ENCODE measurements at regions of chr17 and their contacts with region 1.

Region 1: DNA sequence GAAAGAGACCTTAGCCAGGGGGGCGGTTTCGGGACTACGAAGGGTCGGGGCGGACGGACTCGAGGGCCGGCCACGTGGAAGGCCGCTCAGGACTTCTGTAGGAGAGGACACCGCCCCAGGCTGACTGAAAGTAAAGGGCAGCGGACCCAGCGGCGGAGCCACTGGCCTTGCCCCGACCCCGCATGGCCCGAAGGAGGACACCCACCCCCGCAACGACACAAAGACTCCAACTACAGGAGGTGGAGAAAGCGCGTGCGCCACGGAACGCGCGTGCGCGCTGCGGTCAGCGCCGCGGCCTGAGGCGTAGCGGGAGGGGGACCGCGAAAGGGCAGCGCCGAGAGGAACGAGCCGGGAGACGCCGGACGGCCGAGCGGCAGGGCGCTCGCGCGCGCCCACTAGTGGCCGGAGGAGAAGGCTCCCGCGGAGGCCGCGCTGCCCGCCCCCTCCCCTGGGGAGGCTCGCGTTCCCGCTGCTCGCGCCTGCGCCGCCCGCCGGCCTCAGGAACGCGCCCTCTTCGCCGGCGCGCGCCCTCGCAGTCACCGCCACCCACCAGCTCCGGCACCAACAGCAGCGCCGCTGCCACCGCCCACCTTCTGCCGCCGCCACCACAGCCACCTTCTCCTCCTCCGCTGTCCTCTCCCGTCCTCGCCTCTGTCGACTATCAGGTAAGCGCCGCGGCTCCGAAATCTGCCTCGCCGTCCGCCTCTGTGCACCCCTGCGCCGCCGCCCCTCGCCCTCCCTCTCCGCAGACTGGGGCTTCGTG is at the start of gene MAPT:
- DNase-seq: peak; percentile 84 to 96
- H3K4me3 ChIP-seq: peak within 1 kb of the TSS; percentile 41 to 74 (median 67)
- H3K27ac ChIP-seq: no peak within 1 kb of the TSS
- H3K4me1 ChIP-seq: peaks cover 0 to 20% (median 9%) of the 10 kb centered on the region in 4 experiments; a peak in 6 of 7 replicates
- H3K27me3 ChIP-seq: peaks cover 39 to 60% (median 57%) of the 10 kb centered on the region in 4 experiments
- CTCF ChIP-seq: peak; percentile 84 to 90 (median 87)
- EP300 ChIP-seq: 0 out of 3 replicates have a peak, but pooled peaks of 1 of the 2 experiments have one; percentile 2
- POLR2A ChIP-seq: peak in 1 of 2 experiments; percentile 64; a peak in 2 of 3 replicates
- RAD21 ChIP-seq: peak; percentile 31 to 53
- total RNA-seq, gene MAPT: 1.7 and 2.4 TPM in 2 replicates

Region 2: GRCh38 chr17:45934044-45934979 is 40.1 kb after region 1 on chr17:
- CTCF ChIA-PET with region 1: interaction called, 10 read pairs
- POLR2A ChIA-PET with region 1: no interaction called
- DNase-seq: no peak
- H3K4me3 ChIP-seq: no peak overlapping the region
- H3K27ac ChIP-seq: no peak overlapping the region
- H3K4me1 ChIP-seq: no peaks in the 10 kb centered on the region
- H3K27me3 ChIP-seq: no peaks in the 10 kb centered on the region; a peak in 1 of 7 replicates
- CTCF ChIP-seq: no peak
- EP300 ChIP-seq: no peak
- POLR2A ChIP-seq: no peak
- RAD21 ChIP-seq: no peak